ENCODE measurements at regions of chr2 and their contacts with region 1.

Region 1: GRCh38 chr2:71157124-71157793 is 26.8 kb downstream of the MPHOSPH10 start:
- DNase-seq: peak; percentile 66
- H3K4me3 Mint-ChIP-seq: no peak overlapping the region
- H3K27ac Mint-ChIP-seq: no peak overlapping the region
- H3K4me1 Mint-ChIP-seq: no peaks in the 10 kb centered on the region
- H3K27me3 Mint-ChIP-seq: peaks cover 5% of the 10 kb centered on the region

Region 2: DNA sequence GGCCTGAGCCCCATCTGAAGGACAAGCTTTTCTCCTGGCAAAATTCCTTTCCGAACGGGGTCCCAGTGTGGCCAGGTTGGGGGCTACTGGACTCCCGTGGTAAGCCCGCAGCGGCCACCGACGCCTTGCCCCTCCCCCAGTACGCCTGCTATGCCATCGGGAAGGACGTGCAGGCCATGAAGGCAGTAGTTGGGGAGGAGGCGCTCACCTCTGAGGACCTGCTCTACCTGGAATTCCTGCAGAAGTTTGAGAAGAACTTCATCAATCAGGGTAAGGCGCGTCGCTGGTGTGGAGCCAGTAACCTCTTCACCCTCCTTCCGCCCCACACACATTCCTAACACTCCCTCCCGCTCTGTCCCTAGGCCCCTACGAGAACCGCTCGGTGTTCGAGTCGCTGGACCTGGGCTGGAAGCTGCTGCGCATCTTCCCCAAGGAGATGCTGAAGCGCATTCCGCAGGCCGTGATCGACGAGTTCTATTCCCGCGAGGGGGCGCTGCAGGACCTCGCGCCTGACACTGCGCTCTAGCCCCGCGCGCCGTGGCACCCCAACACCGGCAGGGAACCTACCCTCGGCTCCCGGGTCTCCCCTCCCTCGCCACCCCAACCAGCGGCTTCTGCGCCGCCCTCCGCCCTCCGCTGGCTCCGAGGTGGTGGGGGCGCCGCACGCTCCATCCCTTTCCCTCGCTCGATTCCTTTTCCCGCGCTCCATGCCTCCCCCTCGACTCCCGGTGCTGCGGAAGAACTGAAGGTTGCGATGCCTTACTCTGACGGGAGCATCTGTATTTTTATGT is 192.5 kb before region 1 on chr2:
- CTCF ChIA-PET with region 1: no interaction called
- POLR2A ChIA-PET with region 1: no interaction called
- intact Hi-C with region 1: no loop called
- DNase-seq: peak; percentile 87
- H3K4me3 Mint-ChIP-seq: peak overlapping the region; percentile 76
- H3K27ac Mint-ChIP-seq: no peak overlapping the region
- H3K4me1 Mint-ChIP-seq: peaks cover 3% of the 10 kb centered on the region
- H3K27me3 Mint-ChIP-seq: peaks cover 16% of the 10 kb centered on the region

Region 3: GRCh38 chr2:71049365-71050360 is 107.6 kb before region 1 on chr2:
- CTCF ChIA-PET with region 1: interaction called, 3 read pairs
- POLR2A ChIA-PET with region 1: no interaction called
- intact Hi-C with region 1: loop called (anchors 2 kb)
- DNase-seq: peak; percentile 78
- H3K4me3 Mint-ChIP-seq: no peak overlapping the region
- H3K27ac Mint-ChIP-seq: no peak overlapping the region
- H3K4me1 Mint-ChIP-seq: peaks cover 11% of the 10 kb centered on the region
- H3K27me3 Mint-ChIP-seq: no peaks in the 10 kb centered on the region

Region 4: GRCh38 chr2:71100195-71100964 is 56.9 kb before region 1 on chr2:
- CTCF ChIA-PET with region 1: interaction called, 17 read pairs
- POLR2A ChIA-PET with region 1: no interaction called
- intact Hi-C with region 1: no loop called
- DNase-seq: peak; percentile 69
- H3K4me3 Mint-ChIP-seq: no peak overlapping the region
- H3K27ac Mint-ChIP-seq: no peak overlapping the region
- H3K4me1 Mint-ChIP-seq: no peaks in the 10 kb centered on the region
- H3K27me3 Mint-ChIP-seq: no peaks in the 10 kb centered on the region

Region 5: GRCh38 chr2:71130113-71130904 is 26.9 kb before region 1 on chr2 and contains the starts of genes MCEE and MPHOSPH10:
- CTCF ChIA-PET with region 1: no interaction called
- POLR2A ChIA-PET with region 1: no interaction called
- intact Hi-C with region 1: no loop called
- DNase-seq: peak; percentile 94
- H3K4me3 Mint-ChIP-seq: no peak within 1 kb of the TSS
- H3K27ac Mint-ChIP-seq: no peak within 1 kb of the TSS
- H3K4me1 Mint-ChIP-seq: peaks cover 11% of the 10 kb centered on the region
- H3K27me3 Mint-ChIP-seq: no peaks in the 10 kb centered on the region
- total RNA-seq, gene MCEE: 12.0 to 16.1 TPM
- total RNA-seq, gene MPHOSPH10: 37.1 to 38.5 TPM

Region 6: GRCh38 chr2:71212336-71212735 is 55.1 kb after region 1 on chr2:
- CTCF ChIA-PET with region 1: no interaction called
- POLR2A ChIA-PET with region 1: no interaction called
- intact Hi-C with region 1: no loop called
- DNase-seq: no peak
- H3K4me3 Mint-ChIP-seq: no peak overlapping the region
- H3K27ac Mint-ChIP-seq: no peak overlapping the region
- H3K4me1 Mint-ChIP-seq: no peaks in the 10 kb centered on the region
- H3K27me3 Mint-ChIP-seq: no peaks in the 10 kb centered on the region

Region 7: GRCh38 chr2:71331581-71332434 is 174.5 kb after region 1 on chr2 and contains the start of gene ZNF638:
- CTCF ChIA-PET with region 1: interaction called, 21 read pairs
- POLR2A ChIA-PET with region 1: no interaction called
- intact Hi-C with region 1: no loop called
- DNase-seq: peak; percentile 94
- H3K4me3 Mint-ChIP-seq: peak within 1 kb of the TSS; percentile 94
- H3K27ac Mint-ChIP-seq: peak within 1 kb of the TSS; percentile 93
- H3K4me1 Mint-ChIP-seq: peaks cover 31% of the 10 kb centered on the region
- H3K27me3 Mint-ChIP-seq: peaks cover 2% of the 10 kb centered on the region
- total RNA-seq, gene ZNF638: 74.2 to 87.4 TPM

Region 8: GRCh38 chr2:71510196-71510807 is 353.0 kb after region 1 on chr2:
- CTCF ChIA-PET with region 1: interaction called, 7 read pairs
- POLR2A ChIA-PET with region 1: no interaction called
- intact Hi-C with region 1: loop called (anchors 1 kb)
- DNase-seq: peak; percentile 77
- H3K4me3 Mint-ChIP-seq: no peak overlapping the region
- H3K27ac Mint-ChIP-seq: no peak overlapping the region
- H3K4me1 Mint-ChIP-seq: no peaks in the 10 kb centered on the region
- H3K27me3 Mint-ChIP-seq: peaks cover 5% of the 10 kb centered on the region